Caco-2 (cell line): ENCODE measurements at regions of chr5 and their contacts with region 1.

Region 1: GRCh38 chr5:39217365-39218281 is 1.7 kb downstream of the FYB1 start:
- DNase-seq: peak; percentile 74 to 77
- H3K4me3 ChIP-seq: no peak overlapping the region
- H3K4me3 Mint-ChIP-seq: no peak overlapping the region
- H3K27ac Mint-ChIP-seq: peak overlapping the region; percentile 2
- H3K4me1 ChIP-seq: peaks cover 24% of the 10 kb centered on the region
- H3K4me1 Mint-ChIP-seq: peaks cover 13% of the 10 kb centered on the region
- H3K27me3 ChIP-seq: no peaks in the 10 kb centered on the region
- H3K27me3 Mint-ChIP-seq: no peaks in the 10 kb centered on the region
- CTCF ChIP-seq: peak; percentile 92 to 94

Region 2: GRCh38 chr5:39148983-39149534 is 68.6 kb before region 1 on chr5:
- CTCF ChIA-PET with region 1: no interaction called
- POLR2A ChIA-PET with region 1: no interaction called
- intact Hi-C with region 1: loop called (anchors 1 kb)
- DNase-seq: peak in 1 of 2 experiments; percentile 20
- H3K4me3 ChIP-seq: no peak overlapping the region
- H3K4me3 Mint-ChIP-seq: no peak overlapping the region
- H3K27ac Mint-ChIP-seq: no peak overlapping the region
- H3K4me1 ChIP-seq: peaks cover 8% of the 10 kb centered on the region; the same call in 1 of the 2 replicates
- H3K4me1 Mint-ChIP-seq: peaks cover 11% of the 10 kb centered on the region
- H3K27me3 ChIP-seq: no peaks in the 10 kb centered on the region
- H3K27me3 Mint-ChIP-seq: no peaks in the 10 kb centered on the region
- CTCF ChIP-seq: peak in 1 of 2 experiments; percentile 19

Region 3: DNA sequence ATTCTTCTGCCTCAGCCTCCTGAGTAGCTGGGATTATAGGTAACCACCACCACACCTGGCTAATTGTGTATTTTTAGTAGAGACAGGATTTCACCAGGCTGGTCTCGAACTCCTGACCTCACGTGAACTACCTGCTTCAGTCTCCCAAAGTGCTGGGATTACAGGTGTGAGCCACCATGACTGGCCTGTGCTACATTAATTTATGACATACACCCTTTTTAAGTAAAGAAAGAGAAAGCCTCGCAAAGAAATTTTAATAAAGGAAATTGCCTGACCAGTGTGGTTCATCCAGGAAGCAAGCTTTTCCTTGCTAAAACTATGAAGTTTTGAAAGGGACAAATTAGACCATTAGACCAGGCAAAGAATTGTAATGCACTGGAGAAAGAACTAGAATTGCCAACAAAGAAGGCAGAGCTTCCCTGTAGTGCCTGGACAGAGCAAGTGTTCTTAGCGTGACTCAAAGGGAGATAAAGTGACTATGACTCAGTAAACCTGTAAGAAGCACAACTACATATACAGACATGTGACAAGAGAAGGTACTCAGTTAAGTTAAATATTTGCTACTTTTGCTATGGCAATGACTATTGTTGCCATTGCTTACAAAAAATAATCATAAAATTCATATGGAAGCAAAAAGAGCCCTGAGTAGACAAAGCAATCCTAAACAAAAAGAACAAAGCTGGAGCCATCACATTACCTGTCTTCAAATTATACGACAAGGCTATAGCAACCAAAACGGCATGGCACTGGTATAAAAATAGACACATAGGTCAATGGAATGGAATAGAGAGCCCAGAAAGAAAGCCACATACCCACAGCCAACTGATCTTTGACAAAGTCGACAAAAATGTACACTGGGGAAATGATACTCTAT is 52.9 kb before region 1 on chr5:
- CTCF ChIA-PET with region 1: no interaction called
- POLR2A ChIA-PET with region 1: no interaction called
- intact Hi-C with region 1: no loop called
- DNase-seq: no peak
- H3K4me3 ChIP-seq: no peak overlapping the region
- H3K4me3 Mint-ChIP-seq: no peak overlapping the region
- H3K27ac Mint-ChIP-seq: no peak overlapping the region
- H3K4me1 ChIP-seq: peaks cover 10% of the 10 kb centered on the region
- H3K4me1 Mint-ChIP-seq: peaks cover 9% of the 10 kb centered on the region
- H3K27me3 ChIP-seq: no peaks in the 10 kb centered on the region
- H3K27me3 Mint-ChIP-seq: no peaks in the 10 kb centered on the region
- CTCF ChIP-seq: no peak

Region 4: DNA sequence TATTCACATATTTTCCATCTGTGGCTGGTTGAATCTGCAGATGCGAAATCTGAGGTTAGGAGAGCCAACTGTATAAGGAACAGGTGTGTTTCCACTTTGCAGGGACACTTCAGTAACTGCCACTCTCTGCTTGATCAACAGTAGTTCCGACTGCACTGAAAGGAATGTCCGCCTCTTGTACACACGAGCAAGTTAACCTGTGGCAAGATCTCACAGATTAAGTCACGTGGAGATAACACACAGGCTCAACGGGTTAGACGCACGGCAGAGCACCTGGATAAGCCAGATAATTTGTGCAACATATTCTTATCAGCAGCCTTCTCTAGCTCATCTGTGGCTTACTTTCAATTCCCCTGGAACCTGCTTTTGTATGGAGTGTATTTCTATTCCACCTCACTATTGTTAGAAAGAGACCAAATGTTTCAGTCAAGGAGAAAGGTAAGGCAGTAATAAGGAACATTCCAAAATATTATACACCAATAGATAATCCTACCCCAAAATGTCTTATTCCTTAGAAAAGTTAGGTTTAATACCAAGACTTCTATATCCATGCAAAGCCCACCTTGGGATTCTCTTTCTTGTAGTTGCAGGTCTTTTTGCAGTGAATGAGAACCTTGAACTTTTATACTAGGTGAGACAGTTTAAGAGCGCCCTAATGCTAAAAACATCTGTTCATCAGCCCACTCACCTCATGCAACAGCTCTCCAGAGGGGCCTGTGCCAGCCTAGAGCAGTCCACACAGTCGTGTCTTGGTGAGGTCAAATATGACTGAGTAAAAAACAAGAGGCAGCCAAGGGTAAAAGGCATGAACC is 153.1 kb after region 1 on chr5:
- CTCF ChIA-PET with region 1: interaction called, 13 read pairs
- POLR2A ChIA-PET with region 1: no interaction called
- intact Hi-C with region 1: loop called (anchors 2 kb)
- DNase-seq: peak; percentile 88 to 91
- H3K4me3 ChIP-seq: no peak overlapping the region
- H3K4me3 Mint-ChIP-seq: peak overlapping the region; percentile 56
- H3K27ac Mint-ChIP-seq: peak overlapping the region; percentile 72
- H3K4me1 ChIP-seq: peaks cover 35% of the 10 kb centered on the region
- H3K4me1 Mint-ChIP-seq: peaks cover 24% of the 10 kb centered on the region
- H3K27me3 ChIP-seq: no peaks in the 10 kb centered on the region
- H3K27me3 Mint-ChIP-seq: no peaks in the 10 kb centered on the region
- CTCF ChIP-seq: no peak

Region 5: GRCh38 chr5:39376293-39376714 is 158.7 kb after region 1 on chr5:
- CTCF ChIA-PET with region 1: interaction called, 13 read pairs
- POLR2A ChIA-PET with region 1: no interaction called
- intact Hi-C with region 1: loop called (anchors 2 kb)
- DNase-seq: peak; percentile 51 to 76
- H3K4me3 ChIP-seq: no peak overlapping the region
- H3K4me3 Mint-ChIP-seq: no peak overlapping the region
- H3K27ac Mint-ChIP-seq: no peak overlapping the region
- H3K4me1 ChIP-seq: peaks cover 18% of the 10 kb centered on the region
- H3K4me1 Mint-ChIP-seq: peaks cover 13% of the 10 kb centered on the region
- H3K27me3 ChIP-seq: no peaks in the 10 kb centered on the region
- H3K27me3 Mint-ChIP-seq: no peaks in the 10 kb centered on the region
- CTCF ChIP-seq: peak; percentile 70 to 79

Region 6: GRCh38 chr5:39547553-39548154 is 330.0 kb after region 1 on chr5:
- CTCF ChIA-PET with region 1: interaction called, 5 read pairs
- POLR2A ChIA-PET with region 1: no interaction called
- intact Hi-C with region 1: loop called (anchors 1 kb)
- DNase-seq: peak in 1 of 2 experiments; percentile 65
- H3K4me3 ChIP-seq: no peak overlapping the region
- H3K4me3 Mint-ChIP-seq: no peak overlapping the region
- H3K27ac Mint-ChIP-seq: no peak overlapping the region
- H3K4me1 ChIP-seq: peaks cover 12% of the 10 kb centered on the region
- H3K4me1 Mint-ChIP-seq: no peaks in the 10 kb centered on the region
- H3K27me3 ChIP-seq: no peaks in the 10 kb centered on the region
- H3K27me3 Mint-ChIP-seq: no peaks in the 10 kb centered on the region
- CTCF ChIP-seq: peak; percentile 58 to 82

Region 7: GRCh38 chr5:39570403-39571027 is 352.9 kb after region 1 on chr5:
- CTCF ChIA-PET with region 1: no interaction called
- POLR2A ChIA-PET with region 1: no interaction called
- intact Hi-C with region 1: loop called (anchors 1 kb)
- DNase-seq: peak in 1 of 2 experiments; percentile 34
- H3K4me3 ChIP-seq: no peak overlapping the region
- H3K4me3 Mint-ChIP-seq: no peak overlapping the region
- H3K27ac Mint-ChIP-seq: no peak overlapping the region
- H3K4me1 ChIP-seq: peaks cover 11% of the 10 kb centered on the region; the same call in 1 of the 2 replicates
- H3K4me1 Mint-ChIP-seq: no peaks in the 10 kb centered on the region
- H3K27me3 ChIP-seq: no peaks in the 10 kb centered on the region
- H3K27me3 Mint-ChIP-seq: no peaks in the 10 kb centered on the region
- CTCF ChIP-seq: peak; percentile 69 to 70